Right lobe of liver (tissue), 6 donors: ENCODE measurements at regions of chr19 and their contacts with region 1.

Region 1: DNA sequence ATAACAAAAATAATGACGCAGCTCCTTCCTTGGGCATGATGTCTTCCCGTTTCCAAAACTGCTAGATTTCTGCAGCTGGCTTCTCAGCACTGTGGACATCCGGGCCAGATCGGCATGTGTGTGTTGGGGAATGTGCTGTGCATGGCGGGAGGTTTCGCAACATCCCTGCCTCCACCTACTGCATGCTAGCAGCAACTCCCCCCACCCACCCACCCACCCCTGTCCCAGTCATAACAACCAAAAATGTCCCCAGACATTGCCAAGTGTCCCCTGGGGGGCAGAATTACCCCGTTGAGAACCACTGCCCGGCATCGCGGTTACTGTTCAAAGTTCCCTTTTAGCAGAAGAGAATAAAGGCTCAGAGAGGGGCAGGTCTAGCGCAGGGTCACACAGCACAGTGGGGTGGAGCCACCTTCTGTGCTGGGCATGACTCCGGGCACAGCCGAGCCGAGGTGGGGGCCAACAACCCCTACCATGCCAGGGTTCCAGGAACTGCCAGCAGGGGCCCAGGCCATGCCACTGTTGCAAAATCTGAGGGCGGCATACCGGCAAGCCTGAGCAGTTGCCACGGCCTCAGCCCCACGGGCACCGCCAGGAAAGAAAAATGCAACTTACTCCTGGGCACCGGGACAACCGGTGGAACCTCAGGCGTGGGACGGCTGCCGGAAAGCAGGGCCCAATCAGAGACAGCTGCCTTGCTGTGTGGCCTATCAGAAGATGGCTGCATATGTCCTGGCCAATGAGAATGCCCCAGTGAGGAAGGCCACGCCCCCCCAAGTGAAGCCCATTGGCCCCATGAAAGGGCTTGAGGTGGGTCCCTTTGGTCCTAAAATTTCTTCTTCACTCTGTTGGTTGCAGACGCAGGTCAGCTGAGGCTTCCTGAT is 22.5 kb upstream of the NFIC start:
- DNase-seq: peak; percentile 86 to 96 (median 94)
- ATAC-seq: peak; percentile 76 to 88 (median 85)
- H3K4me3 ChIP-seq: peak overlapping the region in 2 of 3 donors; percentile 12 to 23
- H3K27ac ChIP-seq: peak overlapping the region; percentile 60 to 79 (median 68)
- H3K4me1 ChIP-seq: peaks cover 0 to 44% (median 18%) of the 10 kb centered on the region in 4 donors
- H3K27me3 ChIP-seq: no peaks in the 10 kb centered on the region
- CTCF ChIP-seq: peak; percentile 6 to 36 (median 30)
- POLR2A ChIP-seq: peak; percentile 59

Region 2: DNA sequence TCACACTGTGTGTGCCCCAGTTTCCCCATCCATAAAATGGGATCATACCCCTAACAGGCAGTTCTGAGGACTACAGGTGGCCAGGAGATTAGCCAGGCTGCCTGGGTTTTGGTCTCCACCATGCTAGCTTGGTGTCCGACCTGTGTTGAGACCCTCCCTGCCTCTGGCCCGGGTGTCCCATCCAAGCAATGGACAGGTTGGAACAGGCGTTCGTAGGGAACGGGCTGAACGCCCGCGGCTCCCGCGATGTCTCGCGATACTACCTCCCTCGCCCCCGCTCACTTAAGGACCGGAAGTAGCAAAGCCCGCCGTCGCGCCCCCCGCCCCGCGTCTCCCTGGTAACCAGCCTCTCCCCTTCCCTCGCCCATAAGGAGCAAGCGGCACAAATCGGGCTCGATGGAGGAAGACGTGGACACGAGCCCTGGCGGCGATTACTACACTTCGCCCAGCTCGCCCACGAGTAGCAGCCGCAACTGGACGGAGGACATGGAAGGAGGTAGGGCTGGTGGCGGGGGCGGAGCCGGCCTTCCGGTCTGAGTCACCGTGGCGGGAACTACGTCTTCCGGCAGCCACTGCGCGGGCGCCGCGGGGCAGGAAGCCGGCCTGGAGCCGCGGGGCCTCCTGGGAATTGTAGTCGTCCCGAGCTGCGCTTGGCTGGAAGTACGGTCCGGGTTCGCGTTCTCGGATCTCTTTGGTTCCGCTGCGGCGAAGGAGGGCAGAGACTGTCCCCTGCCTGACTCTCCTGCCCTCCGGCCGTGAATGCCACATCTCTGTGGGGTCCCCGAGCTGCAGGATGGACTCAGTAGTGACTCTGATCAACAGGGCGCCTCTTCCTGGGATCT is 91.1 kb after region 1 on chr19:
- intact Hi-C with region 1: loop called in 1 of 2 experiments (anchors 10 kb)
- DNase-seq: peak; percentile 85 to 93 (median 93)
- ATAC-seq: peak; percentile 68 to 82 (median 72)
- H3K4me3 ChIP-seq: peak overlapping the region; percentile 12 to 40 (median 21)
- H3K27ac ChIP-seq: peak overlapping the region; percentile 70 to 81 (median 77)
- H3K4me1 ChIP-seq: peaks cover 0 to 33% (median 11%) of the 10 kb centered on the region in 4 donors
- H3K27me3 ChIP-seq: no peaks in the 10 kb centered on the region
- CTCF ChIP-seq: no peak
- POLR2A ChIP-seq: no peak